MCF 10A (cell line): ENCODE measurements at regions of chr5 and their contacts with region 1.

Region 1: DNA sequence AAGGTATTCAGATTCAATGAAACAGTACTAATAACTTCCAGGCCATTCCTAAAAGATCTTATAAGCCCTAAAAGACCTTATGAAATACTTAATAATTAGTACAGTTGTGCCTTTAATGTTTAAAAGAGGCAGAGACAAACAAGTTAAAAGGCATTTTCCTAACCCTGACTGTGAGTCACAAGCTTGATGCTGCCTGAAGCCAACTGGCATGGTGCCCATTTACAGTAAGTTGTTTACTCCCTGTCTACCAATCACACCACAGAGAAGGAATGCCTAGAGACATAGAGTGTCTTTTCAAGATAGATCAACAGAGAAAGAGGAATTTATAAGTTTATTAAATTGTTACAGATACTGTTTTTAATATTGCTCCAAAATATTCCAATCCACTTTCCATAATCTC is 47.8 kb downstream of the NR3C1 start:
- DNase-seq: peak; percentile 98
- H3K4me3 Mint-ChIP-seq: no peak overlapping the region
- H3K27ac Mint-ChIP-seq: peak overlapping the region; percentile 44
- H3K4me1 Mint-ChIP-seq: peaks cover 43% of the 10 kb centered on the region
- H3K27me3 Mint-ChIP-seq: no peaks in the 10 kb centered on the region
- CTCF ChIP-seq: no peak

Region 2: GRCh38 chr5:141392429-141393198 is 1963.1 kb before region 1 on chr5 and contains the start of gene PCDHGA8:
- CTCF ChIA-PET with region 1: no interaction called
- POLR2A ChIA-PET with region 1: no interaction called
- intact Hi-C with region 1: no loop called
- DNase-seq: peak; percentile 23
- H3K4me3 Mint-ChIP-seq: no peak within 1 kb of the TSS
- H3K27ac Mint-ChIP-seq: no peak within 1 kb of the TSS
- H3K4me1 Mint-ChIP-seq: no peaks in the 10 kb centered on the region
- H3K27me3 Mint-ChIP-seq: no peaks in the 10 kb centered on the region
- CTCF ChIP-seq: no peak
- total RNA-seq, gene PCDHGA8: 0.28 and 0.56 TPM in 2 replicates

Region 3: DNA sequence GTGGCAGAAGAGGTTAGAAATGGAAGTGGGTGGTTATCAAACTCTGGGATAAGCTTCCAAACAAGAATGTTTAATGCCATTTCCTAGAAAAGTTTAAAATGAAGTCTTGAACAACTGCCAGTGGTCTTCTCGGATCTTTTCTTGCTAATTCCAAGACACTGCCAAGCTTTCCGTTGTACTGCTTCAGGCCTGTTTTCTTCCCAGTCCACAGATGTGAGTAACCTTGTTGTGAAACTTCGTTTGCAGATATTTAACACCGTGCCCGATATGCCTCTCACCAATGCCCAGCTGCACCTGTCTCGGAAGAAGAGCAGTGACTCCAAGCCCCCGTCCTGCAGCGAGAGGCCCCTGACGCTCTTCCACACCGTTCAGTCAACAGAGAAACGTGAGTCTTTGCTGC is 222.0 kb before region 1 on chr5:
- CTCF ChIA-PET with region 1: no interaction called
- POLR2A ChIA-PET with region 1: no interaction called
- intact Hi-C with region 1: no loop called
- DNase-seq: peak; percentile 89
- H3K4me3 Mint-ChIP-seq: peak overlapping the region; percentile 4
- H3K27ac Mint-ChIP-seq: peak overlapping the region; percentile 10
- H3K4me1 Mint-ChIP-seq: peaks cover 32% of the 10 kb centered on the region
- H3K27me3 Mint-ChIP-seq: no peaks in the 10 kb centered on the region
- CTCF ChIP-seq: no peak

Region 4: DNA sequence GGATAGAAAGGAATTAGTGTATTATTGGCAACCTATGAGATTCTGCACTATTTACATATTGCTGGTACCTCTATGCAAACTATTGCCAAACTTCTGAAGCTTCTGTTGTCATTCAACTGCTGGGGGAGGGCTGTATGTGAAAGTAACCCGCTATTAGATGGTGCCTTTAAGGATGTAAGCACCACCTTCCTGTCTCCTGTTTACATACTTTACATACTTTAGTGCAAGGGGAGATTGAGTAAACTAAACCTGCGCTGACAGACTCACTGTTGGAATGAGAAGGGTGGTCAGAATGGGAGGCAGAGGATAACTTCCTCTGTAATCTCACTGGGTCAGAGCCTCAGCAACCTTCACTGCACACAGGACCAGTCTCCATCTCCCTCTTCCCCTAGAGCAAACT is 76.0 kb before region 1 on chr5:
- CTCF ChIA-PET with region 1: no interaction called
- POLR2A ChIA-PET with region 1: no interaction called
- intact Hi-C with region 1: no loop called
- DNase-seq: peak; percentile 20
- H3K4me3 Mint-ChIP-seq: no peak overlapping the region
- H3K27ac Mint-ChIP-seq: peak overlapping the region; percentile 20
- H3K4me1 Mint-ChIP-seq: peaks cover 4% of the 10 kb centered on the region
- H3K27me3 Mint-ChIP-seq: no peaks in the 10 kb centered on the region
- CTCF ChIP-seq: no peak

Region 5: DNA sequence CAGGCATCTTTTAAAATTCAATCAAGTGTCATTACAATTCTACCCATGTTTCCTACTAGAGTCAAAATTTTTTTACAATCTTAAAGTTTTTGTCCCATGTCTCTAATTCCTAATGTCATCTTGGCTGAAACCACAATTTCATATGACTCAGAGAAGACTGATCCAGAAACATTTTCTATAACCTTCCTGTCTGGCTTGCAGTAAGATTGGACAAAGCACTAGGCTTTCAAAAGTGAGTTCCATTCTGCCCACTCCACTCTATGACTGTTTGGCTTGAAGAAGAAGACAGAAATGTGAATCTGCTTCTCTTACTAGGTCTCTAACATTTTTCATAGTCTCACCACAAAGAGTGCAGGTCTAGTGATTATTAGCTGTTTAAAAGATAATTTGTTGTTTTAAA is 41.1 kb before region 1 on chr5:
- CTCF ChIA-PET with region 1: interaction called, 3 read pairs
- POLR2A ChIA-PET with region 1: interaction called, 10 read pairs
- intact Hi-C with region 1: no loop called
- DNase-seq: peak; percentile 68
- H3K4me3 Mint-ChIP-seq: no peak overlapping the region
- H3K27ac Mint-ChIP-seq: peak overlapping the region; percentile 73
- H3K4me1 Mint-ChIP-seq: peaks cover 69% of the 10 kb centered on the region
- H3K27me3 Mint-ChIP-seq: no peaks in the 10 kb centered on the region
- CTCF ChIP-seq: no peak

Region 6: GRCh38 chr5:143376911-143377813 is 21.4 kb after region 1 on chr5:
- CTCF ChIA-PET with region 1: interaction called, 3 read pairs
- POLR2A ChIA-PET with region 1: interaction called, 19 read pairs
- intact Hi-C with region 1: no loop called
- DNase-seq: peak; percentile 72
- H3K4me3 Mint-ChIP-seq: no peak overlapping the region
- H3K27ac Mint-ChIP-seq: peak overlapping the region; percentile 20
- H3K4me1 Mint-ChIP-seq: peaks cover 31% of the 10 kb centered on the region
- H3K27me3 Mint-ChIP-seq: no peaks in the 10 kb centered on the region
- CTCF ChIP-seq: no peak

Region 7: GRCh38 chr5:143714629-143715028 is 358.9 kb after region 1 on chr5:
- CTCF ChIA-PET with region 1: no interaction called
- POLR2A ChIA-PET with region 1: no interaction called
- intact Hi-C with region 1: no loop called
- DNase-seq: peak; percentile 24
- H3K4me3 Mint-ChIP-seq: no peak overlapping the region
- H3K27ac Mint-ChIP-seq: no peak overlapping the region
- H3K4me1 Mint-ChIP-seq: peaks cover 14% of the 10 kb centered on the region
- H3K27me3 Mint-ChIP-seq: no peaks in the 10 kb centered on the region
- CTCF ChIP-seq: no peak